CD4-positive, alpha-beta memory T cell (primary cell): ENCODE measurements at regions of chr19 and their contacts with region 1.

Region 1: DNA sequence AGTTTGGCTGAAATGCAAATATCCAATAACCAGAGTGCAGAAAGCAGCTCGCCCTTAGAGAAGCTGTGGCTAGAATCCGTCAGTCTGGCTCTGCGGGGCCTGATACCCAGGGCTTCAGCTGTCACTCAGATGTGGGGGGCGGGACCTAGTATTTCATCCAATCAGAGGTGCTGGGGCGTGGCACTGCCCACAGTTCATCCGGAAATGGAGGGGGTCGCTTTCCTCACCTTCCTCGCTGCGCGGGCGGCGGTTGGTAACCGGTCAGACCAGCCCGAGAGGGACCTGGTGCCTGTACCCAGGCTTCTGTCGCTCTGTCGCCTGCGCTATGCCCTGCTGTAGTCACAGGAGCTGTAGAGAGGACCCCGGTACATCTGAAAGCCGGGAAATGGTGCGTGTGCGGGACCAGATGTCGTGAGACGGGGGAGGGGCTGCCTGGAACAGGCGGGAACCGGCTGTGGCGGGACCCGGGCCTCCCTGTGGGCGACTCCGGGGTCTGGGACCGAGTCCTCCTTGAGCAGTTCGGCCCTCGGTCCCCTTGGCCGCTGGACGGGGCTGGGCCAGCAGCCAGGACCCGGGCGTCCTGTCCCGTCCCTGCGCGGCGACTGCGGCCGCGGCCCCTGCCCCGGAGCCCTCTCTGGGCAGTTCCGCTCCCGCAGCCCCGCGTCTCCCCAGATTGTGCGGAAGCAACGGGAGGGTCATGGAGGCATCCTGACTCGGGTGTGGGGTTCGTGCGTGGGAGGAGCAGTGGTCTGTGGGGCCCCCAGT is at the start of gene ZNF700:
- DNase-seq: peak; percentile 86 to 95 (median 89)
- H3K4me3 ChIP-seq: peak within 1 kb of the TSS; percentile 99
- H3K4me3 Mint-ChIP-seq: peak within 1 kb of the TSS; percentile 93 to 98 (median 96)
- H3K27ac ChIP-seq: peak within 1 kb of the TSS; percentile 87
- H3K27ac Mint-ChIP-seq: peak within 1 kb of the TSS; percentile 92 to 98 (median 96)
- H3K4me1 ChIP-seq: peaks cover 31% of the 10 kb centered on the region
- H3K4me1 Mint-ChIP-seq: peaks cover 26 to 58% (median 40%) of the 10 kb centered on the region in 4 donors
- H3K27me3 ChIP-seq: no peaks in the 10 kb centered on the region
- H3K27me3 Mint-ChIP-seq: no peaks in the 10 kb centered on the region
- total RNA-seq, gene ZNF700: 24.9 to 25.6 TPM

Region 2: GRCh38 chr19:11881151-11881800 is 43.8 kb before region 1 on chr19:
- CTCF ChIA-PET with region 1: interaction called, 34 read pairs
- POLR2A ChIA-PET with region 1: no interaction called
- intact Hi-C with region 1: loop called (anchors 2 kb)
- DNase-seq: peak; percentile 52 to 67 (median 59)
- H3K4me3 ChIP-seq: no peak overlapping the region
- H3K4me3 Mint-ChIP-seq: peak overlapping the region in 1 of 8 donors; percentile 24
- H3K27ac ChIP-seq: no peak overlapping the region
- H3K27ac Mint-ChIP-seq: no peak overlapping the region
- H3K4me1 ChIP-seq: peaks cover 3% of the 10 kb centered on the region
- H3K4me1 Mint-ChIP-seq: peaks cover 0 to 2% (median under 1%) of the 10 kb centered on the region in 4 donors
- H3K27me3 ChIP-seq: no peaks in the 10 kb centered on the region
- H3K27me3 Mint-ChIP-seq: peaks cover 0 to 1% of the 10 kb centered on the region in 2 donors

Region 3: DNA sequence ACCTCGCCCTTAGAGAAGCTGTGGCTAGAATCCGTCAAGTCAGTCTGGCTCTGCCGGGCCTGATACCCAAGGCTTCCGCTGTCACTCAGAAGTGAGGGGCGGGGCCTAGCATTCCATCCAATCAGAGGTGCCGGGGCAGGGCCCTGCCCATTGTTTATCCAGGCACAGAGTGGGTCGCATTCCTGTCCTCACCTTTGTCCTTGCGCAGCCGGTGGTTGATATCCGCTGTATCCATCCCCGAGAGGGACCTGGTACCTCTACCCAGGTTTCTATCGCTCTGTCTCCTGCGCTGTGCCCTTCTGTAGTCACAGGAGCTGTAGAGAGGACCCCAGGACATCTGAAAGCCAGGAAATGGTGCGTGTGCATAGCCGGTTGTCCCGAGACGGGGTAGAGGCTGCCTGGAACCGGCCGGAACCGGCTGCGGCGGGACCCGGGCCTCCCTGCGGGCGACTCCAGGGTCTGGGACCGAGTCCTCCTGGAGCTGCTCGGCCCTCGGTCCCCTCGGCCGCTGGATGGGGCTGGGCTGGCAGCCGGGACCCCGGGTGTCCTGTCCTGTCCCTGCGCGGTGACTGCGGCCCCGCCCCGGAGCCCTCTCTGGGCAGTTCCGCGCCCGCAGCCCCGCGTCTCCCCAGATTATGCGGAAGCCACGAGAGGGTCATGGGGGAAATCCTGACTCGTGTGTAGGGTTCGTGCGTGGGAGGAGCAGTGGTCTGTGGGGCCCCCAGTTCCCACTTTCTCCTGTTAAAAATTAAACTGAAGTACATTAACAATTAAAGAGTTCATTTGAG is 40.0 kb after region 1 on chr19 and contains the start of gene ZNF763:
- CTCF ChIA-PET with region 1: interaction called, 75 read pairs
- POLR2A ChIA-PET with region 1: interaction called, 40 read pairs
- intact Hi-C with region 1: loop called (anchors 1 kb)
- DNase-seq: peak; percentile 83 to 93 (median 85)
- H3K4me3 ChIP-seq: peak within 1 kb of the TSS; percentile 79 to 86
- H3K4me3 Mint-ChIP-seq: peak within 1 kb of the TSS; percentile 93 to 98 (median 96)
- H3K27ac ChIP-seq: peak within 1 kb of the TSS; percentile 91
- H3K27ac Mint-ChIP-seq: peak within 1 kb of the TSS; percentile 92 to 97 (median 96)
- H3K4me1 ChIP-seq: peaks cover 21% of the 10 kb centered on the region
- H3K4me1 Mint-ChIP-seq: peaks cover 16 to 32% (median 26%) of the 10 kb centered on the region in 4 donors
- H3K27me3 ChIP-seq: no peaks in the 10 kb centered on the region
- H3K27me3 Mint-ChIP-seq: no peaks in the 10 kb centered on the region
- total RNA-seq, gene ZNF763: 14.3 to 16.4 TPM

Region 4: DNA sequence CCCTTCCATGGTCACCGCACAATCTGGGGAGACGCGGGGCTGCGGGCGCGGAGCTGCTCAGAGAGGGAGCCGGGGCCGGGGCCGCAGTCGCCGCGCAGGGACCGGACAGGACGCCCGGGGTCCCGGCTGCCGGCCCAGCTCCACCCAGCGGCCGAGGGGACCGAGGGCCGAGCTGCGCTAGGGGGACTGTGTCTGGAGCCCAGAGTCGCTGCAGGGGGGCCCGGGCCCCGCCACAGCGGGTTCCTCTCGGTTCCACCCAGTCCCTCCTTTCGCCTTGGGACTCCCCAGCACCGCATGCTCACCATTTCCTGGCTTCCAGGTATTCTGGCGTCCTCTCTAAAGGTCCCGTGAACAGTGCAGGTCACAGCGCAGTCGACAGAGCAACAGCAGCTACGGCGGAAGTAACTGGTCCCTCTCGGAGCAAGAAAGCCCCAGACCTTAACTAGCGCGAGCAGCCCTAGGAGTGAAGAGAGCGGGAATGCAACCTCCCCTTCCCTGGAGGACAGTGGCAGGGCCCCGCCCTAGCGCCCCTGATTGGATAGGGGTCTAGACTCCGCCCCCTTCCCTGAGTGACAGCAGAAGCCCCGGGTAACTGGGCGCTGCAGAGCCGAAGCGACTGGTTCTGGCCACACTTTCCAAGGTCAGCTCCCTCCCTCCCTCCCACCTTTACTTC is 127.6 kb after region 1 on chr19 and contains the start of gene ZNF878:
- CTCF ChIA-PET with region 1: interaction called, 14 read pairs
- POLR2A ChIA-PET with region 1: no interaction called
- intact Hi-C with region 1: loop called (anchors 5 kb)
- DNase-seq: peak in 3 of 5 donors; percentile 13 to 23 (median 15)
- H3K4me3 ChIP-seq: peak within 1 kb of the TSS; percentile 30 to 55
- H3K4me3 Mint-ChIP-seq: peak within 1 kb of the TSS; percentile 82 to 90 (median 87)
- H3K27ac ChIP-seq: no peak within 1 kb of the TSS
- H3K27ac Mint-ChIP-seq: peak within 1 kb of the TSS in 3 of 7 donors; percentile 9 to 88 (median 66)
- H3K4me1 ChIP-seq: peaks cover 13% of the 10 kb centered on the region
- H3K4me1 Mint-ChIP-seq: peaks cover 8 to 13% (median 11%) of the 10 kb centered on the region in 4 donors
- H3K27me3 ChIP-seq: no peaks in the 10 kb centered on the region
- H3K27me3 Mint-ChIP-seq: peaks cover 11 to 19% of the 10 kb centered on the region in 2 donors
- total RNA-seq, gene ZNF878: not detected